A673 (cell line): ENCODE measurements at regions of chr12 and their contacts with region 1.

Region 1: DNA sequence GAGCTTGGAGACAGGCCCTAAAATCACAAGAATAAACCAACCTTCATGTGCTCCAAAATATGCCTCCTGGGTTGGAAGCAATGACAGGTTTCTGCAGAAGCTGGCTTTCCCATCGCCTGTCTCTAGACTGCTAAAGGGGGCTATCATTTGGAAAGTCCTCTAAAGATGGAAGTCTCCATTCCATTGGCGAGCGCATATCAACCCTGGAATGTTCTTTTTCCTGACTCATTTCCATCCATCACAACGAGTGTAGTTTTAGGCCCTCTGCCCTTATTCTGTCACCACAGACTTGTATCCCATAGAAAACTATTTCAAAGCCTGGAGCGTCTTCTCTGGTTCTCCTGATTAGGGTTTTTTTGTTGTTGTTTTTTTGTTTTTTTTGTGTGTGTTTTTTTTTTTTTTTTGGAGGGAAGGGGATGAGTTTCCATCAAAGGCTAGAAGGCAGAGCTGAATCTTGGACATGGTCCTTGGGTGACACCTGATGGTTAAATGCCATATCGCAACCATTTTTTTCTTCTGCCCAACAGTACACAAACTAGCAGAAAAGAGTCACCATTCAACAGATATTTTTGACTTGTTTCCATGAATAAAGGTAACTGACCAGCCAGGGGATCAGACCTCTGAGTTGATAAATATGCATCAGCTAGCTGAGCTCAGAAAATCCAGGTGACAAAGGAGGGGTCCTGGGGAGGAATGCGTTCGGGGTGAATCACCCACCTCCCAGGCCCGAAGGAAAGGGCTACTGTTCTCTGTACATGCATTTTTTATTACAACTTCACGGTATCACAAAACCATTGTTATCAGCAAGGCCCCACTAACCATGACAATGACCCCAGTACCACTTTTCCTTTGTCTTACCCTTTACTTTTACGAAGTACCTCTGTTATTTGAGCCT is 40.5 kb downstream of the KCNA5 start:
- DNase-seq: peak; percentile 37
- H3K4me3 ChIP-seq: no peak overlapping the region
- H3K27ac ChIP-seq: no peak overlapping the region
- H3K4me1 ChIP-seq: no peaks in the 10 kb centered on the region
- H3K27me3 ChIP-seq: peaks cover 50% of the 10 kb centered on the region
- CTCF ChIP-seq: peak; percentile 70

Region 2: DNA sequence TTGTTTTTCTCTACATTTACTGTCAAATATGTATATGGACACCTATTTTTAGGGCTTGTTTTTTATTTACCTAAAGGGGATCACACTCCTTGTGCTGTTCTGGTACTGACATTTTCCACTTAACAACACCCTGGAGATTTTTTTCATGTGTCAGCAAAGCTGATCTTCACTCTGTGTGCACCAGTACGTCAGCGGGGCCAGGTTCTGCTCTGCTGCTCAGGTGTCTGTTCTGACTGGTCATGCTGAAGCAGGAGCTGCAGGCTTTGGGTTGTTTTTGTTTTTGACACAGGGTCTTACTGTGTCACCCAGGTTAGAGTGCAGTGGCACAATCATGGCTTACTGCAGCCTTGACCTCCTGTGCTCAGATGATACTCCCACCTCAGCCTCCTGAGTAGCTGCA is 892.6 kb before region 1 on chr12:
- CTCF ChIA-PET with region 1: no interaction called
- POLR2A ChIA-PET with region 1: no interaction called
- intact Hi-C with region 1: no loop called
- DNase-seq: no peak
- H3K4me3 ChIP-seq: no peak overlapping the region
- H3K27ac ChIP-seq: no peak overlapping the region
- H3K4me1 ChIP-seq: no peaks in the 10 kb centered on the region
- H3K27me3 ChIP-seq: peaks cover 23% of the 10 kb centered on the region
- CTCF ChIP-seq: no peak

Region 3: GRCh38 chr12:5003020-5003666 is 81.1 kb before region 1 on chr12:
- CTCF ChIA-PET with region 1: no interaction called
- POLR2A ChIA-PET with region 1: no interaction called
- intact Hi-C with region 1: no loop called
- DNase-seq: peak; percentile 50
- H3K4me3 ChIP-seq: no peak overlapping the region
- H3K27ac ChIP-seq: no peak overlapping the region
- H3K4me1 ChIP-seq: no peaks in the 10 kb centered on the region
- H3K27me3 ChIP-seq: peaks cover 18% of the 10 kb centered on the region
- CTCF ChIP-seq: peak; percentile 79

Region 4: DNA sequence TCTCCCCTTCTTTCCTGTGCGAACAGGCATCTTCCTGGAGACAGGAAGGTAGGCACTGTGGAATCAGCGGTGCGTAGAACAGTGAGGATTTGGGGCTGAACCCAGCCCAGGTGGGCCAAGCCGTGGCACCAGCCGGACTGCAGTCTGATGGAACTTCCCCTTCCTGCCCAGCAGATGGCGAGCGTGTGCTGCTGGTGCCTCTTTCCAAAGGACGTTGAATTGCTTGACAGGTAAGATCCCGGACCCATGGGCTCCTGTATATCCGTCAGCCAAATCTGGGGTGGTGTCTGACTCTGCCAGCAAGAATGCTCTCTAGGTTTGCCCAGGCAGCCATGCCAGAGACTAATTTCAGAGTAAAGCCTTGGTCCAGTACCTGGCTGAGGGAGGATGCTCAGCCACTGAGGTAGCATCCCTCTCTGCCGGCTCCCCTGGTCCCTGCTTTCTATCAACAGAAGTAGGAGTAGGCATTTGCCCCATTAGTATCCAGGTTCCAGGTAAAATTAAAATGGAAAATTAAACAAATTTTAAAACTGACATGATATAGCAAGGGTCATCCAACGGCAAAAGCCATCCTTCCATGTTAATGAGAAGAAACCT is 61.6 kb before region 1 on chr12:
- CTCF ChIA-PET with region 1: no interaction called
- POLR2A ChIA-PET with region 1: no interaction called
- intact Hi-C with region 1: loop called (anchors 1 kb)
- DNase-seq: peak; percentile 11
- H3K4me3 ChIP-seq: no peak overlapping the region
- H3K27ac ChIP-seq: no peak overlapping the region
- H3K4me1 ChIP-seq: no peaks in the 10 kb centered on the region
- H3K27me3 ChIP-seq: peaks cover 25% of the 10 kb centered on the region
- CTCF ChIP-seq: peak; percentile 79